Activated B cell treated with CpG ODN at 0.5 μM for 24 hours (primary cell): ENCODE measurements at regions of chr2 and their contacts with region 1.

Region 1: GRCh38 chr2:3379647-3380534 is at the start of gene TRAPPC12:
- DNase-seq: peak; percentile 94
- ATAC-seq: peak; percentile 76
- H3K4me3 Mint-ChIP-seq: peak within 1 kb of the TSS; percentile 96
- H3K27ac Mint-ChIP-seq: peak within 1 kb of the TSS; percentile 94
- H3K4me1 Mint-ChIP-seq: peaks cover 52% of the 10 kb centered on the region
- H3K27me3 Mint-ChIP-seq: no peaks in the 10 kb centered on the region
- CTCF ChIP-seq: no peak
- total RNA-seq, gene TRAPPC12: 95.4 and 104 TPM in 2 replicates

Region 2: DNA sequence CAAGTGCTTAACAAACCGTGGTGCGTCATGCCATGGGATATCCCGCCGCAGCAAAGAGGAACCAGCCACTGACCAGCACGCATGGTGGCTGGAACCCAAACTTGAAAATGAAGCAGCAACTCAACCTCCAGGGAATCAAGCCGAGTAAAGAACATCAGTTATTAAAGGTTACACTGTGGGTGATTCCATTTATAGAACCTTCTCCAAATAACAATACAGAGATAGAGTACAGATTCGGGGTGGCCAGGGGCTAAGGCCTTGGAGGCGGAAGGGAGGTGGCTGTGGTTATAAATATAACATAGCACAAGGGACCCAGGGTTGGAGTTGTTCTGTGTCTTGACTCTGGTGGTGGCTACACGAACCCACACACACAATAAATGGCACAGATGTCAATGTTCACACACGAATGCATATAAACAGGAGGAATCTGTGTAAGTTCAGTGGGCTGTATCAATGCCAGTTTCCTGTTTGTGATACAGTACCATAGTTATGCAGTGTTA is 125.4 kb before region 1 on chr2:
- CTCF ChIA-PET with region 1: no interaction called
- POLR2A ChIA-PET with region 1: no interaction called
- intact Hi-C with region 1: loop called (anchors 1 kb)
- DNase-seq: peak; percentile 41
- ATAC-seq: peak; percentile 80
- H3K4me3 Mint-ChIP-seq: peak overlapping the region; percentile 68
- H3K27ac Mint-ChIP-seq: peak overlapping the region; percentile 89
- H3K4me1 Mint-ChIP-seq: peaks cover 63% of the 10 kb centered on the region
- H3K27me3 Mint-ChIP-seq: no peaks in the 10 kb centered on the region
- CTCF ChIP-seq: no peak

Region 3: DNA sequence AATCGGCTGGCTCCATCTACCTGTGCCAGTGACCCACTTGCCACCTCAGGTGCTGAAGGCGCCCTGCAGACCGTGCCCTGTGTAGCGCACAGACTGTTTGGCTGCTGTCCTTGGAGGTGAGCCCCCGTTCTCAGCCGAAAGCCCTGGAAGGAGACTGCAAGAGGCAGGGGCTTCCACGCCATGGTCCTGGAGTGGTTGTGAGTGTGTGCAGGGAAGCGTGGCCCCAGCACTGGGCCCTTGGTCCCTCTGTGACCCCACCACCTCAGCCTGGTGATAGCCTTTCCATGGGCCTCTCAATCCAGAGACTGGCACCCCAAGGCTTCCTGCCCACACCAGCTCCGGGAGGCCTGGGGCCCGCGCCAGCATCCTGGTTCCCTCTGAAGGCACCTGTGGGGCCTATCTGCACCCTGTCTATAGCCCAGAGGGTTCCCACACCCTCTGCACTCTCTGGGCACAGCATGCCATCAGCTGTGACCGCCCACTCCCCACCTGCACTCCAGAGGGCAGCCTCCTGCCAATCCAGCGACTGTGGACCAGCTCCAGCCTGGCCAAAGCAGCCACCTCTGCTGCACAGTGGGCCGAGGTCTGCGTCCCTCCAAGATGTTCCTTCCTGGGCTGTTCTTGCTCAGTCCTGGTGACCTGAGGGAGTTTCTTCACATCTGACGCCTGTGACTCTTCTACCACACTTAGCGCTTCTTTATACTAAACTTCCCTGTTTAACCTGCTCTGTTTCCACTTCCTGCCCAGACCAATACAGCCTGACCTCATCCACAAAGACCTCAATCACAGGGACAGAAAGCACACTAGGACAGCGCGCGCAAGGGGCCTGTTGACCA is 111.8 kb before region 1 on chr2:
- CTCF ChIA-PET with region 1: no interaction called
- POLR2A ChIA-PET with region 1: no interaction called
- intact Hi-C with region 1: no loop called
- DNase-seq: no peak
- ATAC-seq: no peak
- H3K4me3 Mint-ChIP-seq: no peak overlapping the region
- H3K27ac Mint-ChIP-seq: no peak overlapping the region
- H3K4me1 Mint-ChIP-seq: peaks cover 2% of the 10 kb centered on the region
- H3K27me3 Mint-ChIP-seq: no peaks in the 10 kb centered on the region
- CTCF ChIP-seq: no peak

Region 4: DNA sequence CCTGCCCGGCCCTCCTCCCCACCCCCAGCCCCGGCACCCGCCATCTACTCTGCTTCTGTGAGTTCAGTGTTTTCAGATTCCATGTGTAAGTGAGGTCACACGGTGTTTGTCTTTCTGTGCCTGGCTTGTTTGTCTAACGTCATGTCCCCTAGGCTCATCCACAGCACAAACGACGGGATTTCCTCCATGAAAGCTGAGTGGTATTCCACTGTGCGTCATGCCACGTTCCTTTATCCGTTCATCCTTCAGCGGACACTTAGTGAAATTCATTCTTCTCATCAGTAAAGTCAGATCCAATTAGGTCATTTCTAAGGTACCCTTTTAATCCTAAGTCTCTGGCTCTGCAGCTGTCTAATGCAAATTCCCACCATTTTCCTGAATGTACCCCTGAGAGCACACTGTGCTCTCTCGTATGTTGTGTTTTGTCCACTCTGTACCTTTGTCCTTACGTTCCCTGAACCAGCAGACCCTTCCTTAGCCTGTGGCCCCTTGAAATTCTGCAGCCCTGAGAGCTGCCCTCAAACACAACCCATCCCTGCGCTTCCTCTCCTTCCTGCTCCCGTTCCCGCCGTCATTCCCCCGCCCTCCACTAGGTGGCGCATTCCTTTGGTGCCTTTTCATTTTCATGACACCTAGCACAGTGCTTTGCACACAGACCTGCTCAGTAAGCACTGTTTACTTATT is 43.7 kb after region 1 on chr2:
- CTCF ChIA-PET with region 1: interaction called, 12 read pairs
- POLR2A ChIA-PET with region 1: interaction called, 5 read pairs
- intact Hi-C with region 1: no loop called
- DNase-seq: peak; percentile 64
- ATAC-seq: peak; percentile 75
- H3K4me3 Mint-ChIP-seq: no peak overlapping the region
- H3K27ac Mint-ChIP-seq: no peak overlapping the region
- H3K4me1 Mint-ChIP-seq: peaks cover 16% of the 10 kb centered on the region
- H3K27me3 Mint-ChIP-seq: no peaks in the 10 kb centered on the region
- CTCF ChIP-seq: peak; percentile 78

Region 5: GRCh38 chr2:3461801-3462492 is 82.1 kb after region 1 on chr2:
- CTCF ChIA-PET with region 1: no interaction called
- POLR2A ChIA-PET with region 1: no interaction called
- intact Hi-C with region 1: loop called (anchors 5 kb)
- DNase-seq: no peak
- ATAC-seq: peak; percentile 80
- H3K4me3 Mint-ChIP-seq: peak overlapping the region; percentile 70
- H3K27ac Mint-ChIP-seq: peak overlapping the region; percentile 90
- H3K4me1 Mint-ChIP-seq: peaks cover 13% of the 10 kb centered on the region
- H3K27me3 Mint-ChIP-seq: no peaks in the 10 kb centered on the region
- CTCF ChIP-seq: peak; percentile 93

Region 6: DNA sequence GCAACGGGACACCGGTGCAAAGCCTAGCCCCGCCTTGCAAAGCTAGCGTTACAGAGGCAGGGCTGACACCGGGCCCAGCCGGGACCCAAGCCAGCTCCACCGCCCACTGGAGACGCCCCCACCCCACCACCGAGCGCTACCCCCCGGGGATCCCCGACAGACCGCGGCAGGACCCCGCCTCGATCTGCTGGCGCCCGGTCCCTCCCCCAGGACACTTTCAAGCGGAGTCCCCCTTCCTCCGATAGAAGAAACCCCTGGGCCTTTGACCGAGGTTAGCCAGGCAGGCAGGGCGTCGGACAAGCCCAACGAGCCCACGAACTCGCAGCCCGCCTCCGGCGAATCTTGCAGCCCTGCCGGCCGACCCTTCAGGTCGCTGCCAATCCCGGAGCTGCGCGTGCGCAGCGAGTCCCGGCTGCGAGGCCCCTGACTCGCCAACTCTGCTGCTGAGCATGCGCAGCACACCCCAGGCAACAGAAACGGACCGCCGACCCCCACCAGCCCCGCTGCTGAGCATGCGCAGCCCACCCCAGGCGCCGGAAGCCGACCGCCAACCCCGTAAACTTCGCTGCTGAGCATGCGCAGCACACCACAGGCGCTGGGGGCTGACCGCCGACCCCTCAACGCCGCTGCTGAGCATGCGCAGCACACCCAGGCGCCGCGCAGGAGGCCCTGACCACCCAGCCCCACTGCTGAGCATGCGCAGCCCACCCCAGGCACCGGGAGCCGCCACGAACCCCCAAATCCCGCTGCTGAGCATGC is 138.8 kb after region 1 on chr2:
- CTCF ChIA-PET with region 1: no interaction called
- POLR2A ChIA-PET with region 1: interaction called, 32 read pairs
- intact Hi-C with region 1: loop called (anchors 1 kb)
- DNase-seq: peak; percentile 98
- ATAC-seq: peak; percentile 76
- H3K4me3 Mint-ChIP-seq: peak overlapping the region; percentile 85
- H3K27ac Mint-ChIP-seq: peak overlapping the region; percentile 91
- H3K4me1 Mint-ChIP-seq: peaks cover 38% of the 10 kb centered on the region
- H3K27me3 Mint-ChIP-seq: no peaks in the 10 kb centered on the region
- CTCF ChIP-seq: no peak

Region 7: GRCh38 chr2:3558205-3559014 is 178.5 kb after region 1 on chr2 and contains the start of gene RNASEH1:
- CTCF ChIA-PET with region 1: no interaction called
- POLR2A ChIA-PET with region 1: interaction called, 46 read pairs
- intact Hi-C with region 1: loop called (anchors 1 kb)
- DNase-seq: peak; percentile 99
- ATAC-seq: peak; percentile 95
- H3K4me3 Mint-ChIP-seq: peak within 1 kb of the TSS; percentile 91
- H3K27ac Mint-ChIP-seq: peak within 1 kb of the TSS; percentile 97
- H3K4me1 Mint-ChIP-seq: peaks cover 45% of the 10 kb centered on the region
- H3K27me3 Mint-ChIP-seq: no peaks in the 10 kb centered on the region
- CTCF ChIP-seq: no peak
- total RNA-seq, gene RNASEH1: 27.4 and 28.5 TPM in 2 replicates

Region 8: DNA sequence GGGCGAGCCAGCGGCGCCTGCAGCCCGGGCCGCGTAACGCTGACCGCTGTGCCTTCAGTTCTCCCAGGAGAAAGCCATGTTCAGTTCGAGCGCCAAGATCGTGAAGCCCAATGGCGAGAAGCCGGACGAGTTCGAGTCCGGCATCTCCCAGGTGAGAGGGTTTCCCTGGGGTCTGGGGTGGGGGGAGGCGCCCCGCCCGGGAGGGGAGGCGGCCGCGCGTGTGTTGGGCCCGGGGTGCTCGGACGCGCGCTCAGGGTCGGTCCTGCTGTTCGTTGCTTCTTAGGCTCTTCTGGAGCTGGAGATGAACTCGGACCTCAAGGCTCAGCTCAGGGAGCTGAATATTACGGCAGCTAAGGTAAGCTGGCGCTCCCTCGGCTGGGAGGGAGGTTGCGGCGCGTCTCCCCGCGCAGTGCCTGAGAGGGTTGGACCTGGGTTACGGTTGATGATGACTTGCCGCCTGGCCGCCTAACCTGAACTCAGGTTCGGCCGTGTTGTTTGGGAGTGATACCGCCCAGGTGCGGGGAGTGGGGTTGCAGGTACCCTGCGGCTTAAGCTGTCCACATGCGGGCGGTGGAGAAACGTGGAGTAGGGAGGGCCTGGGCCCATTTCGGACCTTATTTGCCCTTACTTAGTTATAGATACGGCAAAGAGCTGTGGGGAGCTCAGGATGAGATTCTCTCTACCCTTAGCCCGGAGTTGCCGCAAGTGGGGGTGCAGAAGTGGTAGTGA is 195.8 kb after region 1 on chr2:
- CTCF ChIA-PET with region 1: no interaction called
- POLR2A ChIA-PET with region 1: interaction called, 14 read pairs
- intact Hi-C with region 1: loop called (anchors 1 kb)
- DNase-seq: no peak
- ATAC-seq: peak; percentile 43
- H3K4me3 Mint-ChIP-seq: peak overlapping the region; percentile 91
- H3K27ac Mint-ChIP-seq: peak overlapping the region; percentile 91
- H3K4me1 Mint-ChIP-seq: peaks cover 45% of the 10 kb centered on the region
- H3K27me3 Mint-ChIP-seq: no peaks in the 10 kb centered on the region
- CTCF ChIP-seq: no peak

Region 9: GRCh38 chr2:3594493-3595281 is 214.8 kb after region 1 on chr2 and contains the start of gene COLEC11:
- CTCF ChIA-PET with region 1: no interaction called
- POLR2A ChIA-PET with region 1: no interaction called
- intact Hi-C with region 1: no loop called
- DNase-seq: no peak
- ATAC-seq: no peak
- H3K4me3 Mint-ChIP-seq: no peak within 1 kb of the TSS
- H3K27ac Mint-ChIP-seq: no peak within 1 kb of the TSS
- H3K4me1 Mint-ChIP-seq: peaks cover 6% of the 10 kb centered on the region
- H3K27me3 Mint-ChIP-seq: no peaks in the 10 kb centered on the region
- CTCF ChIP-seq: no peak
- total RNA-seq, gene COLEC11: not detected in 2 replicates